ENCODE measurements at regions of chr1 and their contacts with region 1.

Region 1: GRCh38 chr1:234978397-234979295 is 150.0 kb downstream of the TOMM20 start:
- DNase-seq: peak in 1 of 2 experiments; percentile 91
- ATAC-seq: peak; percentile 7 to 40
- H3K4me3 ChIP-seq: no peak overlapping the region
- H3K27ac ChIP-seq: peak overlapping the region; percentile 94 to 95
- H3K4me1 ChIP-seq: peaks cover 85% of the 10 kb centered on the region
- CTCF ChIP-seq: no peak
- EP300 ChIP-seq: peak; percentile 94 to 96
- POLR2A ChIP-seq: no peak
- RAD21 ChIP-seq: peak; percentile 15 to 67; a peak in 4 of 5 replicates

Region 2: DNA sequence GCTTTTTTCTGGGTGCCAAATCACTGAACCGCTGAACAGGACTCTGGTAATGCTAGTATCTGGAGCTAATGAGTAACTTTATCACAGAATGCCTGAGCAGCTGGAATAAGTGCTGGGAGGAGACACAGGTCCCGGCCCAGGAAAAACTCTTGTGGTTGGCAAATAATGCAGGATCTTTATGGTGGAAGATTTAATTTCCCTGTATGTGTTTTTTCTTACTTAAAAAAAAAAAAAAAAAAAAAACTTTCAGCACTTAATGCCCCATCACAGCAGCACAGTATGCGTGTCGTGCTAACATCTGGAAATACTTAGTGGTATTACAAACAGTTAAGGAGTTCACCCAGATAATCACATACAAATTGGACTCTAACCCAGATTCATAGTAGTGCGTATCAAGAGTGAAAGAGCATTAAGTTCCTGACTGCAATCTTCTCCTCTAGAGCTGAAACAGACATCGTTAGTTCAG is 70.7 kb before region 1 on chr1:
- CTCF ChIA-PET with region 1: no interaction called
- POLR2A ChIA-PET with region 1: no interaction called
- DNase-seq: no peak
- ATAC-seq: no peak
- H3K4me3 ChIP-seq: no peak overlapping the region
- H3K27ac ChIP-seq: peak overlapping the region in 1 of 2 experiments; percentile 46; a peak in 3 of 6 replicates
- H3K4me1 ChIP-seq: 0 out of 3 replicates have a peak, but pooled peaks cover 4% of the 10 kb centered on the region
- CTCF ChIP-seq: no peak
- EP300 ChIP-seq: no peak
- POLR2A ChIP-seq: no peak
- RAD21 ChIP-seq: no peak

Region 3: GRCh38 chr1:234955107-234955731 is 23.4 kb before region 1 on chr1:
- CTCF ChIA-PET with region 1: interaction called, 10 read pairs
- POLR2A ChIA-PET with region 1: interaction called, 8 read pairs
- DNase-seq: no peak
- ATAC-seq: no peak
- H3K4me3 ChIP-seq: no peak overlapping the region
- H3K27ac ChIP-seq: peak overlapping the region; percentile 93 to 96
- H3K4me1 ChIP-seq: peaks cover 58% of the 10 kb centered on the region
- CTCF ChIP-seq: no peak
- EP300 ChIP-seq: no peak
- POLR2A ChIP-seq: no peak
- RAD21 ChIP-seq: no peak

Region 4: GRCh38 chr1:234963180-234963903 is 15.3 kb before region 1 on chr1:
- CTCF ChIA-PET with region 1: interaction called, 13 read pairs
- POLR2A ChIA-PET with region 1: interaction called, 13 read pairs
- DNase-seq: peak; percentile 69 to 92
- ATAC-seq: peak; percentile 36 to 52; a peak in 4 of 6 replicates
- H3K4me3 ChIP-seq: no peak overlapping the region
- H3K27ac ChIP-seq: peak overlapping the region; percentile 93 to 96
- H3K4me1 ChIP-seq: peaks cover 80% of the 10 kb centered on the region
- CTCF ChIP-seq: no peak
- EP300 ChIP-seq: peak; percentile 85 to 91; a peak in 3 of 5 replicates
- POLR2A ChIP-seq: no peak
- RAD21 ChIP-seq: no peak

Region 5: DNA sequence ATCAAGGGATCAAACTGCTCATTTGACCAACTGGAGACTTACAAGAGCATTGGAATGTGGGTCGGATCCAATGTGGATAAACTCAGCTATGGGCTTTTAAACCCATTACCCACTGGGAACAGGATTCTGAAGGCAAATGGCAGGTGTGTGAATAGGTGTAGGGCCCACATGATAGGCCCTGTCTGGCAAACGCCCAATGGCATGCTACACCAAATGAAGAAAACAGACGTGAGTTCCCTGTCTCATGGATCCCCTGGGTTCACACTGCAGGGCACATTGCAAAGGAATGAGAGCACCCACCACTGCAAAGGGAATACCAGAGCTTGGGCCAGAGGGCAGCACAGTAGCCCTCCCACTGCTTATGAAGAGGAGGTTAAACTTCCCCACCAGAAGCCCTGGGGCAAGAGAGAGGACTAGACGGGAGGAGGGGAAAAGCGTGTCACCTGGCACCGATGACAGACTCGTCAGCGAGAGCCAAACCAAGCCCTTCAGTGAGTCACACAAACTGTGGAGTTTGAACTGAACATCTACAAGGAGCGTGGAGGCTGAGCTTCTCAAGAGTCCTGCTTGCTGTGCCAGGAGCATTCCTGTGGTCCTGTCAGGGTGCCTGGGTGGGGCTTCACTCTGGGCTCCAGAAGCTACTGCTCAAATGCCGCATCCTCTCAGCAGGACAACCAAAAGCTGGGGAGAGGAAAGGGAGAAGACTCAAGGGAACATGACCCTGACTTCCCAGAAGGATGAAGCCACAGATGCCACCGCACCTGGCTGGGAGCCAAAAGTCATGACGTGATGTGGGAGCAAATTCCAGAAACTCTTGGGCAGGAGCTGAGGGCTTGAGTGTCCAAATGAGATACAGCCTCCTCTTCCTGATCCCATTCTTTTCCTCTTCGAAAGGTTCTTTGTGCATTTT is 88.9 kb after region 1 on chr1:
- CTCF ChIA-PET with region 1: interaction called, 7 read pairs
- POLR2A ChIA-PET with region 1: interaction called, 14 read pairs
- DNase-seq: peak; percentile 92 to 99
- ATAC-seq: peak; percentile 90
- H3K4me3 ChIP-seq: 0 out of 3 replicates have a peak overlapping the region, but pooled peaks have one; percentile 14
- H3K27ac ChIP-seq: peak overlapping the region; percentile 97 to 98
- H3K4me1 ChIP-seq: peaks cover 66% of the 10 kb centered on the region
- CTCF ChIP-seq: no peak
- EP300 ChIP-seq: peak; percentile 77 to 79; a peak in 3 of 5 replicates
- POLR2A ChIP-seq: no peak
- RAD21 ChIP-seq: peak in 1 of 2 experiments; percentile 66; a peak in 4 of 5 replicates

Measured in A549 (cell line).